Mucosa of descending colon (tissue), 3 donors: ENCODE measurements at regions of chr17 and their contacts with region 1.

Region 1: DNA sequence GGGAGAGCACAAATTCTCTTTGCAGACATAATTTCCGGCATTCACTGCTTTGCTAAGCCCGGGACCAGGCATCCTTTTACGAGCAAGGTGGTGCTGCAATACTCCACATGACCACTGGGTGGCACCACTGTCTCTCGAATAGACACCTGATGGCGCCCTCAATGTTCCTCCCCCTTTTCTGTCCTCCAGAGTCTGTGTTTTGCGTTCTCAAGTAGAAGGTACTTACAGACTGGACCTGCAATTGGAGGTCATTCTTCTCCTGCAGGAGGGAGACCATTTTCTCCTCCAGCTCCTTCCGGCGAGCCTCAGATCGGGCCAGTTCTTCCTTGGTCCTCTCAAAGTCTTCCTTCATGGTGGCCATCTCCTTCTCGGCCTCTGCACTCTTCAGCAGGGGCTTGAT is 45.2 kb downstream of the MYH13 start:
- DNase-seq: peak; percentile 71 to 94 (median 84)
- ATAC-seq: peak; percentile 95
- H3K4me3 ChIP-seq: no peak overlapping the region
- H3K4me1 ChIP-seq: no peaks in the 10 kb centered on the region
- CTCF ChIP-seq: peak; percentile 90

Region 2: GRCh38 chr17:10618202-10618635 is 290.6 kb after region 1 on chr17:
- intact Hi-C with region 1: loop called in 1 of 2 experiments (anchors 5 kb)
- DNase-seq: peak; percentile 57 to 74 (median 66)
- ATAC-seq: peak; percentile 90
- H3K4me3 ChIP-seq: no peak overlapping the region
- H3K4me1 ChIP-seq: no peaks in the 10 kb centered on the region
- CTCF ChIP-seq: peak; percentile 79